Activated CD4-positive, alpha-beta memory T cell treated with anti-CD3 and anti-CD28 coated beads for 36 hours (primary cell): ENCODE measurements at regions of chr6 and their contacts with region 1.

Region 1: GRCh38 chr6:37202788-37203491 is 33.0 kb downstream of the PIM1 start:
- DNase-seq: no peak
- H3K4me3 Mint-ChIP-seq: no peak overlapping the region
- H3K27ac Mint-ChIP-seq: peak overlapping the region; percentile 82
- H3K4me1 Mint-ChIP-seq: peaks cover 58% of the 10 kb centered on the region
- H3K27me3 Mint-ChIP-seq: no peaks in the 10 kb centered on the region

Region 2: DNA sequence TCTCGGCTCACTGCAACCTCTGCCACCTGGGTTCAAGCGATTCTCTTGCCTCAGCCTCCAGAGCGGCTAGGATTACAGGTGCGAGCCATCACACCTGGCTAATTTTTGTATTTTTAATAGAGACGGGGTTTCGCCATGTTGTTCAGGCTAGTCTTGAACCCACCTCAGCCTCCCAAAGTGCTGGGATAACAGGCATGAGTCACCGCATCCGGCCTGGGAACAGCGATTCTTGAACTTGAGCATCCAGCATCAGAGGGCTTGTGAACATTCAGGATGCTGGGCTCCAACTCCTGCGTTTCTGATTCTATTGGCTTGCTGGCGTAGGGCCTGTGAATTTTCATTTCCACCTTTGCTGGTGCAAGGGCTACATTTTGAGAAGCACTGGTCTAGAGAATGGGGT is 57.5 kb before region 1 on chr6:
- CTCF ChIA-PET with region 1: no interaction called
- POLR2A ChIA-PET with region 1: no interaction called
- intact Hi-C with region 1: no loop called
- DNase-seq: no peak
- H3K4me3 Mint-ChIP-seq: no peak overlapping the region
- H3K27ac Mint-ChIP-seq: no peak overlapping the region
- H3K4me1 Mint-ChIP-seq: peaks cover 34% of the 10 kb centered on the region
- H3K27me3 Mint-ChIP-seq: no peaks in the 10 kb centered on the region

Region 3: DNA sequence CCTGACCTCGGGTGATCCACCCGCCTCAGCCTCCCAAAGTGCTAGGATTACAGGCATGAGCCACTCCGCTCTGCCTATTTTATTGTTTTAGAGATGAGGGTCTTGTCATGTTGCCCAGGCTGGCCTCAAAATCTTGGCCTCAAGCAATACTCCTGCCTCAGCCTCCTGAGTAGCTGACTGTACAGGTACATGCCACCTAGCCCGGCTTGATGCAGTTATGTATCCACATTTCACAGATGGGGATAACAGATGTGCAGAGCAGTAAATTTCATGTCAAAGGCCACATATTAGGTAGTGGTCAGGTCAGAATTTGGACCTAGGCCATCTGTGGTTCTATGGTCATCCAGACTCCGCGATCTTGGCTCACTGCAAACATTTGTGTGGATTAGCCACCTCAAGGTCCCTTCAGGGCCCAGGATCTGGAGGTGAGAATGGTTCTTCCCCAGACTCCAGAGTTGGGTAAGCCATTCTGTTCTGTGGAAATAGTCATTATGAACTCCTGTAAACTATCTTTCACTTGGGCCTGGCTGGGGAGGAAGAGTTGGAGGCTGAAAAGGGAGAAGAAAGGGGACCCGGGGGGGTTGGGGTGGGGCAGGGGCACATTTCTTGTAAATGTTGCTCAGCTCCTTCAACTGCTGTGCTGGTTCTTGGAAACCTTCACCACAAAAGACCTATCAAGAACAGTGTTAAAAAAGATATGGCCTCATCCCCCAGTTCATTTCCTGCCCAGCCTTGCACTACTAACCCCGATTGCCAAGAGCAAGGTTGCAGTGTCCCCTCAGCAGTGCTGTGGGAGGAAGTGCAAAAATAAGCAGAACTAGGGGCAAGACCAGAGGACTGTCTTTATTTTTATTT is 20.0 kb before region 1 on chr6:
- CTCF ChIA-PET with region 1: interaction called, 283 read pairs
- POLR2A ChIA-PET with region 1: no interaction called
- intact Hi-C with region 1: loop called (anchors 1 kb)
- DNase-seq: peak; percentile 82
- H3K4me3 Mint-ChIP-seq: peak overlapping the region; percentile 48
- H3K27ac Mint-ChIP-seq: peak overlapping the region; percentile 96
- H3K4me1 Mint-ChIP-seq: peaks cover 55% of the 10 kb centered on the region
- H3K27me3 Mint-ChIP-seq: no peaks in the 10 kb centered on the region

Region 4: GRCh38 chr6:37190159-37190535 is 12.8 kb before region 1 on chr6:
- CTCF ChIA-PET with region 1: interaction called, 33 read pairs
- POLR2A ChIA-PET with region 1: interaction called, 3 read pairs
- intact Hi-C with region 1: loop called (anchors 1 kb)
- DNase-seq: peak; percentile 58
- H3K4me3 Mint-ChIP-seq: no peak overlapping the region
- H3K27ac Mint-ChIP-seq: peak overlapping the region; percentile 72
- H3K4me1 Mint-ChIP-seq: peaks cover 67% of the 10 kb centered on the region
- H3K27me3 Mint-ChIP-seq: no peaks in the 10 kb centered on the region